Body of pancreas (tissue), 4 donors: ENCODE measurements at regions of chr17 and their contacts with region 1.

Region 1: GRCh38 chr17:11388054-11388453 is 147.0 kb downstream of the SHISA6 start:
- DNase-seq: no peak
- ATAC-seq: no peak
- H3K4me3 ChIP-seq: no peak overlapping the region
- H3K27ac ChIP-seq: no peak overlapping the region
- H3K4me1 ChIP-seq: no peaks in the 10 kb centered on the region
- H3K27me3 ChIP-seq: no peaks in the 10 kb centered on the region
- CTCF ChIP-seq: no peak
- POLR2A ChIP-seq: no peak

Region 2: DNA sequence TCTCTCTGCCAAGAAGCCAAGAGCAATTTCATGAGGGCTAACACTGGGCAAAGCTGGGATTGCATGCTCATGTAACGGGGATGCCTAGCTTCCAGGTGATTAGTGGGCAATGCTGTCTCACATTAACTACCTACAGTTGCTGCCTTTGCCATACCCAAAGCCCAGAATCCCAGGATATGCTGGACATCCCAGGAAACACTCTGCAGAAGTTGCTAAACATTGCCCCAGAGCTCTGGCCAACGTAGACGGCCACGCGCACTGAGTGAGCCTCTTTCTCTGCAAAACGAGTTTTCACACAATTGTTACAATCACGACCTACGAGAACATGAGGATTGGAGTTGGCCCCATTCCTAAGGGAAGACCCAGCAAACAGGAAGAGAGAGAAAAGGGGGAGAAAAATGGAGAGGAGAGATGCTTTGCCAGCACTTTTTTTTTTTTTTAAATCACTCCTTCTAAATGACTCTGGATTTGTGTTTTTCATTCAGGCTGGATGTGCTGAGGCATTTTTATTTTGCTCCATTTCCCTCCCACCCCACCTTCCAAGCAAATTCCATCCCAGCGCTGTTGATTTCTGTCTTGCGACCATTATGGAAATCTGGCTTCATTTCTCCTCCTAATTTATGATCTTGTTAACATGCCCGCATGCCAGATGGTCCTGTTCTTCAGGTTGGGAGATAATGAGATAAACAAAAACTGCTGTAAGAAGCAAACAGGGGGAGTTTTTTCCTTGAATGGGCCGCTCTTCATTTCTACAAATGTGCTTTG is 97.5 kb after region 1 on chr17:
- intact Hi-C with region 1: no loop called
- DNase-seq: no peak
- ATAC-seq: no peak
- H3K4me3 ChIP-seq: no peak overlapping the region
- H3K27ac ChIP-seq: no peak overlapping the region
- H3K4me1 ChIP-seq: peaks cover 4% of the 10 kb centered on the region
- H3K27me3 ChIP-seq: no peaks in the 10 kb centered on the region
- CTCF ChIP-seq: no peak
- POLR2A ChIP-seq: no peak

Region 3: DNA sequence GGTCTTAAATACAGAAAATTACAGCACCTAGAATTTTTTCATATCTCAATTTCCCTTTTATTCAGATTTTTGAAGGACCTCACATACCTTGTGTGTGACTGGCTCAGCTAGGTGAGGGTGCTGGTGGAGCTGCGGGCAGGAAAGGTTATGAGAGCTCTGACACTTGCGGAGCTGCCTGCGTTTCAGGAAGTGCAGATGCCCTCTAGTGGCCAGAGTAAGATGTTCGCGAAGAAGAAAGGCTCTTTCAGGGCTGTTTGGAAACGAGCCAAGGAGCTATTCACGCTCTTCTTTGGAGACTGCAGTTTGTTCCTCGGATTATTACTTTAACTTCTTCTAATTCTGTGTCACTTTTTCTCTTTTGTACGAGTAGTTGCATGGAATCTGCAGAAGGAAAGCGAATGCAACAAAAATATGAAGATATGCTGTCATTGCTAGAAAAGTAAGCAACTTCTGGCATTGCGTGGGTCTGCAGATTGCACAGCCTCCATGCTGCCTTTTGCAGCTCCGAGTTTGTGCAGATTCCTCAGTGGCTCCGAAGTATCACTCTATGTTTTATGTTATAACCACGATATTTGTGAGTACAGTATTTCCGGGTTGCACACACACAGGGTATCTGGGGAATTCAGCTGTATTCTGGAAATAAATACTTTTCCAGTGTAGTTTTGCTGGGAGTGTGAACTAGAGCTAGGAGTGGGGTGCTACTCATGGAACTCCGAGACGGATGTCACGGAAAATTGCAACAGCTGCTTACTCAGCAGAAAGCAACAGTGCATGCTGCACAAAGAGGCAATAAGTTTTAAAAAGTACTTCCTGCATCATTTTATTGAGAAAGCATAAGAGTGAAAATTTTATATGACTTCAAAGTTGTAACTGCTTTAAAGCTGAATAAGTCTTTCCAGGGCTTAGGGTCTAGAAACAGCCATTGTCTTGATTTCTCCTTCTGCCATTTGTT is 256.5 kb after region 1 on chr17:
- intact Hi-C with region 1: loop called (anchors 10 kb)
- DNase-seq: peak; percentile 79 to 90 (median 88)
- ATAC-seq: peak; percentile 93
- H3K4me3 ChIP-seq: no peak overlapping the region
- H3K27ac ChIP-seq: no peak overlapping the region
- H3K4me1 ChIP-seq: peaks cover 7% of the 10 kb centered on the region
- H3K27me3 ChIP-seq: no peaks in the 10 kb centered on the region
- CTCF ChIP-seq: peak; percentile 70 to 88 (median 79)
- POLR2A ChIP-seq: no peak